T-cell (primary cell): ENCODE measurements at regions of chr19 and their contacts with region 1.

Region 1: DNA sequence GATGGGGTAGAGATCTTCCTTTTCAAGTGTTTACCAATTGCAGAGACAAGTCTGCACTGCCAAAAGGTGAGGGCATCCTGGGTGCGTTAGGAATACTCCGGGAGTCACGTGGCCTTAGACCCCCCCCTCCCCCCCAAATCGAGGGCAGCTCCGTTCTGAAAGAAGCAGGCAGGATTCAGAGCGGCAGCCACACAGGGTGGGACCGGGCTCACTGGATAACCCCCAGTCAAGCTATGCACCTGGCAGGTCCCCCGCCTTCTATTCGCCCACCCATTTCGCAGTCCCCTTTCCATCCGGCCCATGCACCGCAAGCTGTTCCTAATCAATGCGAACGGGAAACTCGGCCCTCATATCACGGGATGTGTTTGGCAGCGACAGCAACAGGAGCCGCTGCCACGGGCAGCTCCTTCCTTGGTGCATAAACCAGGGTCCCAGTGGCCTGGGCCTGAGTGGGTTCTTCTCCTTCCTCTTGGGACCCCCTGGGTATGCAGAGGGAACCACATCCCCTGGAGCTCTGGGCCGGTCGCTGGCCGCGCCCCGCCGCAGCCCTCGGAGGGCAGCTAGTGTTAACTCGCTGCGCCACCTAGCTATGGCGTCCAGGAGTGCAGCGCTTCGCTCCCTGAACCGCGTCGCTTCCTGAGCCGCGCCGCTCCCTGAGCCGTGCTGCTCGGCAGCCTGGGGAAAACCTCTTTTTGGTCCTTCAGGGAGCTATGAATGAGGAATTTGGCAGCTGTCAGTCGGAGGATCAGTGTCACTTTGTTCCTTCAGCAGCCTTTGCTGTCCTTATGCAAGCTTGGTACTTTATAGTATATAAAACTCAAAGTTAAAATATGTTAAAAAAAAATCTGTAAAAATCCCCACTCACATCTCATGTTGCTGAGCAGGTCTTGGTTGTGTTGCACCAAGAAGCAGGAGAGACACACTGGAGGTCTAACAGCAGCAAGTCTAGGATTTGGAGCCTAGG is 41.4 kb downstream of the LYL1 start:
- DNase-seq: peak; percentile 23 to 87 (median 67)
- ATAC-seq: peak; percentile 94 to 98 (median 96)
- H3K4me3 ChIP-seq: peak overlapping the region; percentile 53 to 82
- H3K4me3 Mint-ChIP-seq: peak overlapping the region; percentile 71 to 81 (median 72)
- H3K27ac ChIP-seq: no peak overlapping the region
- H3K27ac Mint-ChIP-seq: no peak overlapping the region
- H3K4me1 ChIP-seq: peaks cover 0 to 19% of the 10 kb centered on the region in 2 experiments
- H3K4me1 Mint-ChIP-seq: peaks cover 0 to 9% (median 9%) of the 10 kb centered on the region in 3 donors
- H3K27me3 ChIP-seq: peaks cover 5 to 71% of the 10 kb centered on the region in 2 experiments
- H3K27me3 Mint-ChIP-seq: peaks cover 10 to 23% of the 10 kb centered on the region in 2 donors

Region 2: GRCh38 chr19:12965017-12965811 is 96.0 kb before region 1 on chr19:
- CTCF ChIA-PET with region 1: interaction called, 10 to 13 read pairs
- POLR2A ChIA-PET with region 1: no interaction called
- DNase-seq: peak; percentile 47 to 88 (median 71)
- ATAC-seq: peak; percentile 94 to 98 (median 97)
- H3K4me3 ChIP-seq: peak overlapping the region; percentile 47 to 79
- H3K4me3 Mint-ChIP-seq: peak overlapping the region; percentile 83 to 95 (median 86)
- H3K27ac ChIP-seq: no peak overlapping the region
- H3K27ac Mint-ChIP-seq: peak overlapping the region; percentile 65 to 76
- H3K4me1 ChIP-seq: peaks cover 0 to 11% of the 10 kb centered on the region in 2 experiments
- H3K4me1 Mint-ChIP-seq: peaks cover 5 to 12% (median 6%) of the 10 kb centered on the region in 3 donors
- H3K27me3 ChIP-seq: no peaks in the 10 kb centered on the region
- H3K27me3 Mint-ChIP-seq: no peaks in the 10 kb centered on the region

Region 3: DNA sequence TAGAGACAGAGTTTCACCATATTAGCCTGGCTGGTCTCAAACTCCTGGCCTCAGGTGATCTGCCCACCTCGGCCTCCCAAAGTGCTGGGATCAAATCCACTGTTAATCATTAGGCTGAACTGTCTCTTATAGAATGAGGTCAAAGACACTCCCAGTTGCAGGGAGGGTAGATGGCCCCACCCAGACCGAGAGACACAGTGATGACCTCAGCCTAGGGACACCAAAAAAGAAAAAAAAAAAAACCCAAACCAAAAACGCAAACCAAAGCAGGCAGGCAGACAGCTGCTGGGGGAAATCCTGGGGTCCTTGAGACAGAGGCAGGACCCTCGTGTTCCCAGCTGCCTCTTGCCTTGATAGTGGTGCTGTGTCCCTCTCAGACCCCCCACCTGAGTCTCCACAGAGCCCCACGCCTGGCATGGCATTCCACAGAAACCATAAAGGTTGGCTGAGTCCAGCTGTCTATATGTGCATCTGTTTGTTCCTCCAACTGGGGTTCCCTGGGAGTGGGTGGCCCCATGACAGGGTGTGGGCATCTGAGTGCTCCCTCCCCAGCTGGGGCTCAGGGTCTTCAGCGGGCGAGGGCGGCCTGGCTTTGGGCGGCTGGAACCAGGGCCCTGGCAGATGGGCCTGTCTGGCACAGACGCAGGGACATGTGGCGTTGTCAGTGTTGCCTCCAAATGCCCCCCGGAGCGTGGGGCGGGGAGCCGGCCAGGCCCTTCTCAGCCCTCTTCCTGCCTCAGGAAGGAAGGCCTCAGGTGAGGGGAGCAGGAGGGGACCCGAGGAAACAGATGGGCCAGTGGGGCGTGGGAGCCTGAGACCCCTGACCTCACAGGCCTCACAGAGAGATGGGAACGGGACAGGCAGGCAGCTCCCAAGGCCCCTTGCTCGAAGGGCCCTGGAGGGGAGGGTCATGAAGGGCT is 86.7 kb before region 1 on chr19:
- CTCF ChIA-PET with region 1: interaction called, 8 to 32 read pairs
- POLR2A ChIA-PET with region 1: no interaction called
- DNase-seq: no peak
- ATAC-seq: no peak
- H3K4me3 ChIP-seq: no peak overlapping the region
- H3K4me3 Mint-ChIP-seq: no peak overlapping the region
- H3K27ac ChIP-seq: no peak overlapping the region
- H3K27ac Mint-ChIP-seq: no peak overlapping the region
- H3K4me1 ChIP-seq: peaks cover 0 to 6% of the 10 kb centered on the region in 2 experiments
- H3K4me1 Mint-ChIP-seq: peaks cover 0 to 7% (median 3%) of the 10 kb centered on the region in 3 donors
- H3K27me3 ChIP-seq: peaks cover 0 to 38% of the 10 kb centered on the region in 2 experiments
- H3K27me3 Mint-ChIP-seq: peaks cover 12 to 14% of the 10 kb centered on the region in 2 donors

Region 4: DNA sequence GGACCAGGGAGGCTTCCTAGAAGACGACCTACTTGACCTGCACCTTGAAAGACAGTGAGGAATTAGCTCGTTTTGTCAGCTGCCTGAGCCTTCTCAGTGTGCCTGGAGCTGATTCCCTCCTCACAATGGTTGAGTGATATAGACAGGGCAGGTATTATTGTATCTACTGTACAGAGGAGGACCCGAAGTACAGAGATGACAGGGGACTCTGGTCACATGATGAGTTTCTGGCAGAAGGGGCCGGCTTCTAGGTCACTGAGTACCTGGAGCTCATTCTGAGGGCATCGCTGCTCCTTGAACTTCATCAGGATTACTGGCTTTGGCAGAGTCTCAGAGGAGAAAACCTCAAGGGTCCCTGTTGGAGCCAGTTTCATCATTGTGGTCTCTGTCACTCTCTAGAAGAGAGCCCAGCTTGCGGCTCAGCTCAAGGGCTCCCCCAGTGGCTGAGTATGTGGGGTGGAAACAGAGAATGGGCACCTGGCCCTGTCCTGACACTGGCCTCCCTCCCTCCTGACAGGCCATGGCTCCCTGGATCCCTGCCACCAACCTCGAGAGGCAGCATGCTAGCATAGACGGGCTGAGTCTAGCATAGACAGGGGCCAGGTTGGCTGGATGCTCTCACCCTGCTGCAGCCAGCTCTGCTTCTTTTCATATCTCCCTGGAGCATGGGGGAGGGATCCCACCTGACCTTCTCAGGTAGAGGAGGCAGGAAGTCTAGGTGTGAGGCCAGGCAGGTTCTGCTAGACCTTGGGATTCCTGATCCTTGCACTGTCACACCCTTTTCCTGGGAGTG is 27.2 kb before region 1 on chr19:
- CTCF ChIA-PET with region 1: interaction called in 1 of 2 experiments, 12 read pairs
- POLR2A ChIA-PET with region 1: no interaction called
- DNase-seq: peak in 18 of 35 experiments; percentile 15 to 57 (median 38)
- ATAC-seq: peak; percentile 55 to 73 (median 61)
- H3K4me3 ChIP-seq: no peak overlapping the region
- H3K4me3 Mint-ChIP-seq: no peak overlapping the region
- H3K27ac ChIP-seq: no peak overlapping the region
- H3K27ac Mint-ChIP-seq: no peak overlapping the region
- H3K4me1 ChIP-seq: peaks cover 0 to 3% of the 10 kb centered on the region in 2 experiments
- H3K4me1 Mint-ChIP-seq: peaks cover 0 to 1% (median 0%) of the 10 kb centered on the region in 3 donors
- H3K27me3 ChIP-seq: peaks cover 0 to 28% of the 10 kb centered on the region in 2 experiments
- H3K27me3 Mint-ChIP-seq: no peaks in the 10 kb centered on the region

Region 5: GRCh38 chr19:13044231-13044836 is 16.9 kb before region 1 on chr19:
- CTCF ChIA-PET with region 1: interaction called in 1 of 2 experiments, 15 read pairs
- POLR2A ChIA-PET with region 1: no interaction called
- DNase-seq: peak in 33 of 35 experiments; percentile 13 to 76 (median 55)
- ATAC-seq: peak; percentile 71 to 89 (median 78)
- H3K4me3 ChIP-seq: no peak overlapping the region
- H3K4me3 Mint-ChIP-seq: peak overlapping the region in 1 of 3 donors; percentile 13
- H3K27ac ChIP-seq: peak overlapping the region; percentile 81
- H3K27ac Mint-ChIP-seq: peak overlapping the region; percentile 16 to 63
- H3K4me1 ChIP-seq: peaks cover 0 to 35% of the 10 kb centered on the region in 2 experiments
- H3K4me1 Mint-ChIP-seq: peaks cover 19 to 21% (median 19%) of the 10 kb centered on the region in 3 donors
- H3K27me3 ChIP-seq: peaks cover 0 to 7% of the 10 kb centered on the region in 2 experiments
- H3K27me3 Mint-ChIP-seq: peaks cover 0 to 2% of the 10 kb centered on the region in 2 donors

Region 6: GRCh38 chr19:13093407-13094105 is 32.3 kb after region 1 on chr19:
- CTCF ChIA-PET with region 1: interaction called, 4 to 11 read pairs
- POLR2A ChIA-PET with region 1: no interaction called
- DNase-seq: peak; percentile 63 to 90 (median 78)
- ATAC-seq: peak; percentile 66 to 76 (median 70)
- H3K4me3 ChIP-seq: no peak overlapping the region
- H3K4me3 Mint-ChIP-seq: no peak overlapping the region
- H3K27ac ChIP-seq: no peak overlapping the region
- H3K27ac Mint-ChIP-seq: no peak overlapping the region
- H3K4me1 ChIP-seq: peaks cover 17 to 44% of the 10 kb centered on the region in 2 experiments
- H3K4me1 Mint-ChIP-seq: peaks cover 18 to 30% (median 28%) of the 10 kb centered on the region in 3 donors
- H3K27me3 ChIP-seq: peaks cover 0 to 50% of the 10 kb centered on the region in 2 experiments
- H3K27me3 Mint-ChIP-seq: peaks cover 5 to 15% of the 10 kb centered on the region in 2 donors

Region 7: GRCh38 chr19:13122275-13122878 is 61.1 kb after region 1 on chr19:
- CTCF ChIA-PET with region 1: no interaction called
- POLR2A ChIA-PET with region 1: no interaction called
- DNase-seq: peak in 2 of 35 experiments; percentile 28 to 45
- ATAC-seq: no peak
- H3K4me3 ChIP-seq: no peak overlapping the region
- H3K4me3 Mint-ChIP-seq: no peak overlapping the region
- H3K27ac ChIP-seq: no peak overlapping the region
- H3K27ac Mint-ChIP-seq: peak overlapping the region; percentile 42 to 56
- H3K4me1 ChIP-seq: peaks cover 10 to 45% of the 10 kb centered on the region in 2 experiments
- H3K4me1 Mint-ChIP-seq: peaks cover 42 to 48% (median 47%) of the 10 kb centered on the region in 3 donors
- H3K27me3 ChIP-seq: no peaks in the 10 kb centered on the region
- H3K27me3 Mint-ChIP-seq: no peaks in the 10 kb centered on the region

Region 8: GRCh38 chr19:13356686-13357280 is 295.5 kb after region 1 on chr19:
- CTCF ChIA-PET with region 1: no interaction called
- POLR2A ChIA-PET with region 1: no interaction called
- DNase-seq: no peak
- ATAC-seq: no peak
- H3K4me3 ChIP-seq: no peak overlapping the region
- H3K4me3 Mint-ChIP-seq: no peak overlapping the region
- H3K27ac ChIP-seq: no peak overlapping the region
- H3K27ac Mint-ChIP-seq: no peak overlapping the region
- H3K4me1 ChIP-seq: no peaks in the 10 kb centered on the region
- H3K4me1 Mint-ChIP-seq: no peaks in the 10 kb centered on the region
- H3K27me3 ChIP-seq: peaks cover 0 to 34% of the 10 kb centered on the region in 2 experiments
- H3K27me3 Mint-ChIP-seq: peaks cover 33 to 50% of the 10 kb centered on the region in 2 donors